Ascending aorta (tissue), 2 donors: ENCODE measurements at regions of chr15 and their contacts with region 1.

Region 1: GRCh38 chr15:89206908-89207331 is 14.5 kb downstream of the RLBP1 start:
- DNase-seq: peak in 1 of 2 donors; percentile 84
- H3K4me3 ChIP-seq: peak overlapping the region in 1 of 2 donors; percentile 47
- H3K27ac ChIP-seq: no peak overlapping the region
- H3K4me1 ChIP-seq: peaks cover 0 to 3% of the 10 kb centered on the region in 2 donors
- H3K27me3 ChIP-seq: no peaks in the 10 kb centered on the region
- CTCF ChIP-seq: peak; percentile 81 to 99 (median 98)

Region 2: DNA sequence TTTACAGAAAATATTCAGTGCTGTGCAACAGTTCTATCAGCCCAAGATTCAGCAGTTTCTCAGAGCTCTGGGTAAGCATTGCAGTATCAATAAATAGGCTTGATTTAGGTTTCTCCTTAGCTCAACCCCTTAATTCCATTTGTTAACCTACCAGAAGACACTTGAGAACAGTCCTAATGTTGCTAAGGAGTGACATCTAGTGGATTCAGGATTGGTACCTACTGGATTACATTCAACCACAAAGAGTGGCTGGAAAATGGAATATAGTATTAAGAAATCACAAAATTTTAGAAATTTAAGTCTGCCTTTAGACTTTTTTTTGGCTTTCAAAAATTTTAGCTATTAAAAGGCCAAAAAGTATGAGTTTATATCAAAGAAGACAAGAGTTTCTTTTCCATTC is 93.0 kb after region 1 on chr15:
- intact Hi-C with region 1: loop called (anchors 2 kb)
- DNase-seq: no peak
- H3K4me3 ChIP-seq: no peak overlapping the region
- H3K27ac ChIP-seq: no peak overlapping the region
- H3K4me1 ChIP-seq: no peaks in the 10 kb centered on the region
- H3K27me3 ChIP-seq: no peaks in the 10 kb centered on the region
- CTCF ChIP-seq: peak in 2 of 3 experiments; percentile 15 to 24